Colonic mucosa (tissue), 4 donors: ENCODE measurements at regions of chr12 and their contacts with region 1.

Region 1: GRCh38 chr12:117025481-117026151 is 73.6 kb downstream of the TESC start:
- DNase-seq: peak; percentile 60
- H3K4me3 ChIP-seq: no peak overlapping the region
- H3K27ac ChIP-seq: no peak overlapping the region
- H3K4me1 ChIP-seq: no peaks in the 10 kb centered on the region
- H3K27me3 ChIP-seq: no peaks in the 10 kb centered on the region
- CTCF ChIP-seq: peak; percentile 88

Region 2: DNA sequence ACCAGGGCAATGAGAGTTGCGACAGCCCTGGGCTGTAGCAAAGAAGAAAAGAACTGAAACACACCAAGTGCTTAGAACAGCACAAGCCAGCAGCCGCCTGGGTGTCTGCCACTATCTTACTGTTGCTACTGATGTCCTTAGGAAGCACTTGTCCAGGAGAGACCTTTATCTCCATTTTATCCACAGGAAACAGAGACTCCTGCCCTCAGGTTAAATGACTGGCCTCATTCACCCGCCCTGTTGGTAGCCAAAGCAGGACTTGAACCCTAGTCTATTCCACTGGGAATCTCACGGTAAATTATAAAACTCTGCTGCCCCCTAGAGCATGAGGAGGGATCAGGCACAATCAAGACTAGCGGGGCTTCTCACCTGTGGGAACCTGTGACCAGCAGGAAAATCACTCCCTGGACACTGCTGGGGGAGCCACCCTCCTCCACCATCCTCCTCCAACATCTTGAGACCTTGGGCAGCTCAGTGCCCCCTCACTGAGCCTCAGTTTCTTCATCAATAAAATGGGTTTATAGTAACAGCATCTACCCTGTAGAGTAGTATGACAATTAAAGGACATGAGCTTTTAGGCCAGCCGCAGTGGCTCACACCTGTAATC is 94.1 kb after region 1 on chr12:
- intact Hi-C with region 1: loop called (anchors 2 kb)
- DNase-seq: peak; percentile 38
- H3K4me3 ChIP-seq: no peak overlapping the region
- H3K27ac ChIP-seq: no peak overlapping the region
- H3K4me1 ChIP-seq: no peaks in the 10 kb centered on the region
- H3K27me3 ChIP-seq: no peaks in the 10 kb centered on the region
- CTCF ChIP-seq: peak; percentile 64

Region 3: DNA sequence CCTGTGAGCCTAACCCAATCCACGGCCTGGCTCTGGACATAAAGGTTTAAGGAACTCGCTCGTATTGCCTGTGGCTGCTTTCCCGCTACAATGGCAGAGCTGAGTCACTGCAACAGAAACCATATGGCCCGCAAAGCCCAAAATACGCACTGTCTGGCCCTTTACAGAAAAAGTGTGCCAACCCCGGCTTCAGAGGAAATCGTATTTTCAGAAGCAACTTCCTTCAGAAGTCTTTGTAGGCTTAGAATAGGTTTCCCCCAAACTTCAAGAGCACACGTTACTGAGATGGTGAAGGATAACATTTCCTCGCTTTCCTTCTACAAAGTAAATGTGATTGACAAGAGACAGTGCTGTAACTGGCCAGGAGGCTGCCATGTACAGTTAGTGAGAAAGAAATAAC is 108.4 kb after region 1 on chr12:
- intact Hi-C with region 1: no loop called
- DNase-seq: no peak
- H3K4me3 ChIP-seq: no peak overlapping the region
- H3K27ac ChIP-seq: no peak overlapping the region
- H3K4me1 ChIP-seq: no peaks in the 10 kb centered on the region
- H3K27me3 ChIP-seq: no peaks in the 10 kb centered on the region
- CTCF ChIP-seq: no peak

Region 4: GRCh38 chr12:117243488-117243887 is 217.9 kb after region 1 on chr12:
- intact Hi-C with region 1: no loop called
- DNase-seq: no peak
- H3K4me3 ChIP-seq: no peak overlapping the region
- H3K27ac ChIP-seq: no peak overlapping the region
- H3K4me1 ChIP-seq: no peaks in the 10 kb centered on the region
- H3K27me3 ChIP-seq: no peaks in the 10 kb centered on the region
- CTCF ChIP-seq: no peak